MCF 10A (cell line): ENCODE measurements at regions of chr3 and their contacts with region 1.

Region 1: DNA sequence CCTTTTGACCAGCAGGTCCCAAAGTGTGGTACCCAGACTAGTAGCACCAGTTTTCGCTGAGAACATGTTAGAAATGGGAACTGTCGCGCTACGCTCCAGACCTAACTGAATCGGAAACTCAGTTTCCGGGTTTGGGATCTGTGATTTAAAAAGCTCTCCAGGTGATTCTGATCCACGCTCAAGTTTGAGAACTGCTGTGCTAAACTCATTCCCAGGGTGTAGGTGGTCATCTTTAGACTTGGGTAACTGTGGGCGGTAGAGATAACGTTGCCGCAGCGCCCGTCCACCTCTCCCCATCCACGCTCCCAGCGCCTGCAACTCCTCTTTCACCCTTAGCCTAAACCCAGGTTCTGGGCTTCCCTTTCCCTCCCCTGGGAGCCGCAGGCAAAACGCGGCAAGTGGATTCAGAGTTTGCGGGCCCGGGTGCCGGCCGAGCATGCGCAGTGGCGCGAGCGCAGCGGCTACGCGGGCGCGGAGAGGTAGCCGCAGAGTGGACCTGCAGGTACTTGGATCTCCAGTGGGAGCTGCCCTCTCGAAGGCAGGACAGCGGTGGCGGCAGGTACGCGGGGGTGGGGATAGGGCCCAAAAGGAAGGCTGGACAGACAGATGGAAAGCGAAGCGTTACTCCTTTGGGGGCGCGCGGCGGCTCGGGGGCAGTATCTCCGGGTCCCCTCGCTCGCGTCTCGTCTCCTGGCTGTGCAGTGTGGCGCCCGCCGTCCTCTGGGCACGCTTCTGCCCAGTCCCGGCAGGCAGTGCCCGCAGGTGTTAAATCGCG is at the start of gene PLS1:
- DNase-seq: peak; percentile 92
- H3K4me3 Mint-ChIP-seq: peak within 1 kb of the TSS; percentile 96
- H3K27ac Mint-ChIP-seq: peak within 1 kb of the TSS; percentile 94
- H3K4me1 Mint-ChIP-seq: peaks cover 12% of the 10 kb centered on the region
- H3K27me3 Mint-ChIP-seq: no peaks in the 10 kb centered on the region
- CTCF ChIP-seq: no peak
- total RNA-seq, gene PLS1: 7.3 and 9.3 TPM in 2 replicates

Region 2: GRCh38 chr3:142374687-142375086 is 221.5 kb before region 1 on chr3:
- CTCF ChIA-PET with region 1: no interaction called
- POLR2A ChIA-PET with region 1: no interaction called
- intact Hi-C with region 1: no loop called
- DNase-seq: no peak
- H3K4me3 Mint-ChIP-seq: no peak overlapping the region
- H3K27ac Mint-ChIP-seq: no peak overlapping the region
- H3K4me1 Mint-ChIP-seq: no peaks in the 10 kb centered on the region
- H3K27me3 Mint-ChIP-seq: no peaks in the 10 kb centered on the region
- CTCF ChIP-seq: no peak

Region 3: GRCh38 chr3:142578327-142579223 is 17.6 kb before region 1 on chr3 and contains the start of gene ATR:
- CTCF ChIA-PET with region 1: interaction called, 8 read pairs
- POLR2A ChIA-PET with region 1: interaction called, 76 read pairs
- intact Hi-C with region 1: no loop called
- DNase-seq: peak; percentile 97
- H3K4me3 Mint-ChIP-seq: peak within 1 kb of the TSS; percentile 95
- H3K27ac Mint-ChIP-seq: peak within 1 kb of the TSS; percentile 90
- H3K4me1 Mint-ChIP-seq: peaks cover 29% of the 10 kb centered on the region
- H3K27me3 Mint-ChIP-seq: peaks cover 14% of the 10 kb centered on the region
- CTCF ChIP-seq: no peak
- total RNA-seq, gene ATR: 27.2 and 30.2 TPM in 2 replicates

Region 4: DNA sequence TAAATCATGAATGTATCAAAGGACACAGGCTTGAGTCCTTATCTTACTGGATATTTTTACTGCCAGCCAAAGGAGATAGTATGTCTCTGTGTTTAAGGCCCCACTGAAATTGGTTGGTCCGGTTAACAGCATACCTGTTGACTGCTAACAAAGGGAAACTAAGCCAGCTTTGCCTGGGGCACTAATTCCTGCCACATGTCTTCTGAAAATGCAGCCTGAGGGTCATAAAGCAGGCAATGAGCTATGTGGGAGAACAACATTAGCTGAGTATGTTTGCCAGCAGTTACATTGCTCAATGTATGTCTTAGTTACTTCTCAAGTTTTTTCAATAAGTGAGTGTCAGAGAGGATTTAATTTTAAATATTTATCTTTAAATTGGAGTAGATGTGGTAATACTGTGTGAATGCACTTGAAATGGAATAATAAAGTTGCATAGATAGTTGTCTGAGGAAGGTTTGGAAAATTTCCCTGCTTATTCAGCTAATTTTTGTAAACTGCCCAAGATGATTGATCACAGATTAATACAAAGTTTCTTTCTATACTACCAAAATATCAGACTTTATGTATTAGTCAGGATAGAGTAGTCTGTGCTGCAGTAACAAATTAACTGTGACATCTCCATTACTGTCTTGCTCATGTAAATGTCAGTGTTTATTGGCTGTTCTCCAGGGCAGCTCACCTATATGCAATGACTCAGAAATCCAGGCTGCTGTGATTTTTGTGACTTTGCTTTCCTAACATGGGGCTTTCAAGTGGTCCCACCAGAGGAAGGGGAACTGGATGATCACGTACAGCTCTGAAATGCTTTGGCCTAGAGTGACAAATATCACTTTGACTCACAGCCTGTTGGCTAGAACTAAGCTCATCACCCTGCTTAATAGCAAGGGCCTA is 12.8 kb after region 1 on chr3:
- CTCF ChIA-PET with region 1: no interaction called
- POLR2A ChIA-PET with region 1: interaction called, 12 read pairs
- intact Hi-C with region 1: no loop called
- DNase-seq: no peak
- H3K4me3 Mint-ChIP-seq: no peak overlapping the region
- H3K27ac Mint-ChIP-seq: no peak overlapping the region
- H3K4me1 Mint-ChIP-seq: peaks cover 9% of the 10 kb centered on the region
- H3K27me3 Mint-ChIP-seq: no peaks in the 10 kb centered on the region
- CTCF ChIP-seq: no peak

Region 5: GRCh38 chr3:142645236-142645793 is 49.2 kb after region 1 on chr3:
- CTCF ChIA-PET with region 1: interaction called, 4 read pairs
- POLR2A ChIA-PET with region 1: interaction called, 30 read pairs
- intact Hi-C with region 1: loop called (anchors 5 kb)
- DNase-seq: peak; percentile 80
- H3K4me3 Mint-ChIP-seq: no peak overlapping the region
- H3K27ac Mint-ChIP-seq: no peak overlapping the region
- H3K4me1 Mint-ChIP-seq: peaks cover 28% of the 10 kb centered on the region
- H3K27me3 Mint-ChIP-seq: no peaks in the 10 kb centered on the region
- CTCF ChIP-seq: no peak

Region 6: DNA sequence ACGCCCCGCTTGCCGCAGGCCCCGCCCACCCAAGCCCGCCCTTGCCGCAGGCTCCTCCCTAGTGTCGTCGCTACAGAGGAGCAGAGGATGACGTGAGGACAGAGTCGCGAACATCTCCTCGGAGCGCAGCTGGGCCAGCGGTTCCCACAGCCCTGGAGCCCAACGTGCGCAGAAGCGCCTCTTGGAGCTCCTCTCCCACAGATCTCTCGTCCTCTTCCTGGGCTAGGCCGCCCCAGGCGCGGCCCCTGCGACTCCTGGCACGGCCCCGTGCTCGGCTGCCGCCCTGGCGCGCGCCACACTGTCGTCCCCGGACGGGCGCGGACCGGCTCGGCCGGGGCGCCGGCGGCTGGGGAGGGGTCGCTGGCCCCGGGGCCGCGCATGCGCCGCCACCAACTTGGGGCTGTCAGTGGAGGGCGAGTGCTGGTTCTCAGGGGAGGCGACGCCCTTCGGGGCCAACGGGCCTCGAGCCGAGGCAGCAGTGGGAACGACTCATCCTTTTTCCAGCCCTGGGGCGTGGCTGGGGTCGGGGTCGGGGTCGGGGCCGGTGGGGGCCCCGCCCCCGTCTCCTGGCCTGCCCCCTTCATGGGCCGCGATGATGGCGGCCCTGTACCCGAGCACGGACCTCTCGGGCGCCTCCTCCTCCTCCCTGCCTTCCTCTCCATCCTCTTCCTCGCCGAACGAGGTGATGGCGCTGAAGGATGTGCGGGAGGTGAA is 128.0 kb after region 1 on chr3 and contains the start of gene TRPC1:
- CTCF ChIA-PET with region 1: no interaction called
- POLR2A ChIA-PET with region 1: interaction called, 32 read pairs
- intact Hi-C with region 1: loop called (anchors 1 kb)
- DNase-seq: peak; percentile 83
- H3K4me3 Mint-ChIP-seq: peak within 1 kb of the TSS; percentile 91
- H3K27ac Mint-ChIP-seq: peak within 1 kb of the TSS; percentile 86
- H3K4me1 Mint-ChIP-seq: peaks cover 7% of the 10 kb centered on the region
- H3K27me3 Mint-ChIP-seq: no peaks in the 10 kb centered on the region
- CTCF ChIP-seq: no peak
- total RNA-seq, gene TRPC1: 9.2 and 15.2 TPM in 2 replicates

Region 7: GRCh38 chr3:142993958-142994442 is 397.9 kb after region 1 on chr3:
- CTCF ChIA-PET with region 1: interaction called, 3 read pairs
- POLR2A ChIA-PET with region 1: interaction called, 37 read pairs
- intact Hi-C with region 1: loop called (anchors 2 kb)
- DNase-seq: peak; percentile 85
- H3K4me3 Mint-ChIP-seq: no peak overlapping the region
- H3K27ac Mint-ChIP-seq: no peak overlapping the region
- H3K4me1 Mint-ChIP-seq: no peaks in the 10 kb centered on the region
- H3K27me3 Mint-ChIP-seq: no peaks in the 10 kb centered on the region
- CTCF ChIP-seq: peak; percentile 65

Region 8: DNA sequence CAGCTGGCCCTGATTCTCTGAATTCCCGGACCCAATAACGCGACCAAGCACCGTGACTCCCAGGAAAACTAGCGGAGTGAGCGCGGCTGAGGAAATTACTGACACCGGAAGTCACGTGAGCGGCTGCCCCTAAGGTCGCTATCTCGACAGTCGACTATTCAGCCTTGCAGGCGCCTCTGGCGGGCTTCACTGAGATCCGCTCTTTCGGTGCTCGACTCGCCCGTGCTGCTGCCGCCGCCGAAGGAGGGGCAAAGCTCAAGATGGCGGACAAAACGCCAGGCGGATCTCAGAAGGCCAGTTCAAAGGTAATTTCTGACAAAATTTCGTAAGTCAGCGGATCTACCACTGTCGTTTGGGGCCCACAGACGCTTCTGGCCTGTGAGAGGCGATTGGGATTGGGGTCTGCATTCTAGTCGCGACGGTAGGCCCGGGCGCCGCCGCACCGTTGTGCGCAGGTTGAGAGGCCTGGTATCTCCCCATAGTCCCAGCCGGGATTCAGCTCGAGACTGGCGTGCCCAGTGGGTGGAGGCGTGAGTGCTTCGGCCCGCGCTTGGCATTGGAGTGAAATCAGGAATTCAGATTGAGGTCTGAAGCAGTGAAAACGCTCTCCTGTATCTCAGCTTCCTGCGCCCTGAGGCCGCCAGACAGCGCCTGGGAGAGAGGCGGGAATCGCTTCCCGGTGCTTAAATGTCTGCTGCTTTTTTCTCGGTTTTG is 405.4 kb after region 1 on chr3 and contains the start of gene U2SURP:
- CTCF ChIA-PET with region 1: interaction called, 3 read pairs
- POLR2A ChIA-PET with region 1: interaction called, 37 read pairs
- intact Hi-C with region 1: no loop called
- DNase-seq: peak; percentile 98
- H3K4me3 Mint-ChIP-seq: peak within 1 kb of the TSS; percentile 94
- H3K27ac Mint-ChIP-seq: peak within 1 kb of the TSS; percentile 99
- H3K4me1 Mint-ChIP-seq: peaks cover 25% of the 10 kb centered on the region
- H3K27me3 Mint-ChIP-seq: no peaks in the 10 kb centered on the region
- CTCF ChIP-seq: no peak
- total RNA-seq, gene U2SURP: 131 and 146 TPM in 2 replicates